ENCODE measurements at regions of chr3 and their contacts with region 1.

Region 1: GRCh38 chr3:170414202-170414663 is 4.4 kb upstream of the CLDN11 start:
- DNase-seq: peak in 6 of 7 donors; percentile 26 to 69 (median 49)
- H3K4me3 ChIP-seq: no peak overlapping the region
- H3K27ac ChIP-seq: no peak overlapping the region
- H3K4me1 ChIP-seq: peaks cover 6 to 11% of the 10 kb centered on the region in 2 donors
- H3K27me3 ChIP-seq: peaks cover 15% of the 10 kb centered on the region
- CTCF ChIP-seq: peak; percentile 86 to 96 (median 93)
- POLR2A ChIP-seq: no peak

Region 2: DNA sequence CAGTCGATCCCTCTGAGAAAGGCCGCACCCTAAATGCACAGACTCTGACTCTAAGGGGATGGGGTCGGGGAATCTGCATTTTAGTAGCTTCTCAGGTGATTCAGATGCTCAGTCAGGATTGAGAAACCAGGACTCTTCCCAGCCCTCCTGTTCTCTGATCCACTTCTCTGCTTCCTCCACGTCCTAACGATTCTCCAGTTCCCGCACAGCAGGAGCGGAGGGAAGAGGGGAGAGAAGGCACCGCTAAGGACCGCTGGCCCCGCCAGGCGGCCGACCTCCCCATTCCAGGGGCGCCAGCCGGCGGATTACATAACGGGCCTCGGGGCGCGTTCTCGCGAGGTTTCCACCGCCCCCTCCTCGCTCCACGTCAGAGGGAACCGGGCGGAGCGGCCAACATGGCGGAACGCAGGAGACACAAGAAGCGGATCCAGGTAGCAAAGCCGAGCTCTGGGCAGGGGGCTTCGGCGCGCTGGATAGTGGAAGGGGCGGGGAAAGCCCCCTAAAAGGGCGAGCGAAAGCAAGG is 447.7 kb before region 1 on chr3 and contains the start of gene SEC62:
- intact Hi-C with region 1: no loop called
- DNase-seq: peak; percentile 91 to 97 (median 94)
- H3K4me3 ChIP-seq: peak within 1 kb of the TSS; percentile 42 to 86 (median 73)
- H3K27ac ChIP-seq: peak within 1 kb of the TSS; percentile 47 to 100 (median 96)
- H3K4me1 ChIP-seq: peaks cover 22 to 39% of the 10 kb centered on the region in 2 donors
- H3K27me3 ChIP-seq: no peaks in the 10 kb centered on the region
- CTCF ChIP-seq: peak in 4 of 6 experiments; percentile 15 to 53 (median 38)
- POLR2A ChIP-seq: peak; percentile 76 to 78
- total RNA-seq, gene SEC62: 41.1 to 199 (median 125) TPM

Region 3: DNA sequence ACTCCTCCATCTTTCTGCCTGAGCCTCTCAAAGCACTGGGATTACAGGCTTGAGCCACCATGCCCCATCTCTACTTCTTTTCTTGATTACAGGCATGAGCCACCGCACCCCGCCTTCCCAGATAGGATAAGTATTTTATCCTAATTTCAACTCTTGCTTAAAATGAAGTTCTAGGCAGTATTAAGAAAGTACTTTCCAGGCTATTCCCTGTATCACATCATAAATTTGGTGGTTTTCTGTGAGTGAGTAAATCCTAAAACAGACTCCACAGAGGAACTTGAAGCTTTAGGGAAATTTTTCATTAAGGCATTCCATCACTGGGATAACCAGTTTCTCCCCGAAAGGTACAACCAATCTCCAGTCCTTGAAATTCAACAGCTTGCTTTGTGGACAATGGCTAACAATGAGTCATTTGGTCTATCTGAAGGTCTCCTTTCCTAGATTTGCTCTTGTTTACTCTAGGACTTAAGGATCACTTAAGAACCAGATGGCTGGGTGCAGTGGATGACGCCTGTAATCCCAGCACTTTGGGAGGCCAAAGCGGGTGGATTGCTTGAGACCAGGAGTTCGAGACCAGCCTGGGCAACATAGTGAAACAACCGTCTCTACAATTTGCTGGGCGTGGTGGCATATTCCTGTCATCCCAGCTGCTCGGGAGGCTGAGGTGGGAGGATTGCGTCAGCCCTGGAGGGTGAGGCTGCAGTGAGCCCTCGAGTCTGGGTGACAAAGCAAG is 106.4 kb before region 1 on chr3:
- intact Hi-C with region 1: loop called (anchors 2 to 5 kb)
- DNase-seq: no peak
- H3K4me3 ChIP-seq: no peak overlapping the region
- H3K27ac ChIP-seq: no peak overlapping the region
- H3K4me1 ChIP-seq: no peaks in the 10 kb centered on the region
- H3K27me3 ChIP-seq: no peaks in the 10 kb centered on the region
- CTCF ChIP-seq: no peak
- POLR2A ChIP-seq: no peak

Region 4: DNA sequence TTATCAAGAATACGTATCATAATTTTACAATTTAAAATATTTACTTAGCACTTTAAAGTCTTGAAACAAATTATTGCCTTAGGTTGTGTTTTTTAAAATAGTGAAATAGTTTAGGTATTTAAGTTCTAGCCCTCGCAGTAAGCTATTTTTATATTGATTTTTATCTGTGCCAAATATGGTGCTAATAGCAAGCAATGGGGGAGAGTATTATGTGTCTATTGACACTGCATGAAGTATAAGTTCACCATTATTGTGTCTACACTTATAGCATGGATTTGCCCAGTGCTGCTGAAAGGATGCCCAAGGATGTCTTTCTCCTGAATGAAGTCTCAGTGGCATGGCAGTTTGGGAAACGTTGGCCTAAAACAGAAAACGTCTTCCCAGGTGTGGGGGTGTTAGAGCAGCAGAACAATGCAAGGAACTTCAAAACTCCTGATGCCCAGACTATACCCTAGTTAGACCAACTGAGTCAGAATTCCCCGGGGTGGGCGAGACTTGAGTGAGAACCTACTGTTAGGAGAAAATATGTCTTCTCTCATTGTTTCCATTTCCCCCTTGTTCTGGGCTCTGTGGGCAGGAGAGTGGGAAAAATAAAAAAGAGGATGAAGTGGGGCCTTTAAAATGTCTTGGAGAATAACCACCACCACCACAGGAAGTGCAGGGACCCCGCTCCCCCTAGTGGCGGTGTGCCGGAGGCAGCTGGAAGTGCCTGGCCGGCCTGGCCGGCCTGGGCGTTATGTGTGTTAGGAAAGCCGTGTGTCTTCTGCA is 275.8 kb after region 1 on chr3:
- intact Hi-C with region 1: loop called in 1 of 2 experiments (anchors 10 kb)
- DNase-seq: peak; percentile 46 to 84 (median 73)
- H3K4me3 ChIP-seq: no peak overlapping the region
- H3K27ac ChIP-seq: no peak overlapping the region
- H3K4me1 ChIP-seq: no peaks in the 10 kb centered on the region
- H3K27me3 ChIP-seq: no peaks in the 10 kb centered on the region
- CTCF ChIP-seq: peak; percentile 57 to 86 (median 69)
- POLR2A ChIP-seq: no peak

Region 5: GRCh38 chr3:170806676-170807075 is 392.4 kb after region 1 on chr3:
- intact Hi-C with region 1: loop called (anchors 2 to 10 kb)
- DNase-seq: no peak
- H3K4me3 ChIP-seq: no peak overlapping the region
- H3K27ac ChIP-seq: no peak overlapping the region
- H3K4me1 ChIP-seq: peaks cover 0 to 4% of the 10 kb centered on the region in 2 donors
- H3K27me3 ChIP-seq: peaks cover 4% of the 10 kb centered on the region
- CTCF ChIP-seq: no peak
- POLR2A ChIP-seq: no peak

Region 6: GRCh38 chr3:170811928-170812591 is 397.8 kb after region 1 on chr3:
- intact Hi-C with region 1: loop called (anchors 2 to 10 kb)
- DNase-seq: peak; percentile 59 to 86 (median 76)
- H3K4me3 ChIP-seq: no peak overlapping the region
- H3K27ac ChIP-seq: no peak overlapping the region
- H3K4me1 ChIP-seq: peaks cover 0 to 7% of the 10 kb centered on the region in 2 donors
- H3K27me3 ChIP-seq: no peaks in the 10 kb centered on the region
- CTCF ChIP-seq: peak; percentile 92 to 99 (median 94)
- POLR2A ChIP-seq: no peak

Measured in adrenal gland (tissue), 19 donors.